K562 (cell line): ENCODE measurements at regions of chr3 and their contacts with region 1.

Region 1: DNA sequence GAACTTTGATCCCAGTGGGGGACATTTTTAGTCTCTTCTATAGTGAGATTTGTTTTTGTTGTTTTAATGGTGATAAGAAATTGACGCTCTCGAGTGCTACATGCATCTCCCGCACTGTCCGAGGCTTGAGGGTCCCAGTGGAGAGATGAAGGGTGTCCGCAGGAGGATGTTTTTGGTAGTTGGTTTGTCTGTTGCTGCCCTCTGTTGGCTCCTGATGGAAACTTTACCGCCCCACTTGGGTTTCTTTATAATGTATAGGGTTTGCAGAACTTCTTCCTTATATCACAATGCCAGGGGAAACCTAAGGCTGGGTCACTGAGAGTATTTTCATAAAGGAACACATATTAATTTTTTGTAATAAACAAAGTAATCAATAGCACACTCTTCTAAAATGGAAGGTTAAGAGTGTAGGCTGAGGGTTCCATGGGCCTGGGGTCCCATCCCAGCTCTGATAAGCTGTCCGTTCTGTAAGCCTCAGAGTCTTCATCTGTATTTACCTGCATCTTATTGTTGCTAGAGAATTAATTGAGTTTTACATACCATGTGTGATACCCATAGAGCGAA is 185.3 kb upstream of the FEZF2 start:
- DNase-seq: peak; percentile 12 to 17 (median 14)
- ATAC-seq: peak; percentile 59
- H3K4me3 ChIP-seq: no peak overlapping the region
- H3K27ac ChIP-seq: no peak overlapping the region
- H3K4me1 ChIP-seq: no peaks in the 10 kb centered on the region
- H3K27me3 ChIP-seq: no peaks in the 10 kb centered on the region
- CTCF ChIP-seq: peak; percentile 32 to 44 (median 38); a peak in 4 of 6 replicates
- EP300 ChIP-seq: no peak
- POLR2A ChIP-seq: no peak
- RAD21 ChIP-seq: peak; percentile 10 to 35; a peak in 2 of 4 replicates

Region 2: DNA sequence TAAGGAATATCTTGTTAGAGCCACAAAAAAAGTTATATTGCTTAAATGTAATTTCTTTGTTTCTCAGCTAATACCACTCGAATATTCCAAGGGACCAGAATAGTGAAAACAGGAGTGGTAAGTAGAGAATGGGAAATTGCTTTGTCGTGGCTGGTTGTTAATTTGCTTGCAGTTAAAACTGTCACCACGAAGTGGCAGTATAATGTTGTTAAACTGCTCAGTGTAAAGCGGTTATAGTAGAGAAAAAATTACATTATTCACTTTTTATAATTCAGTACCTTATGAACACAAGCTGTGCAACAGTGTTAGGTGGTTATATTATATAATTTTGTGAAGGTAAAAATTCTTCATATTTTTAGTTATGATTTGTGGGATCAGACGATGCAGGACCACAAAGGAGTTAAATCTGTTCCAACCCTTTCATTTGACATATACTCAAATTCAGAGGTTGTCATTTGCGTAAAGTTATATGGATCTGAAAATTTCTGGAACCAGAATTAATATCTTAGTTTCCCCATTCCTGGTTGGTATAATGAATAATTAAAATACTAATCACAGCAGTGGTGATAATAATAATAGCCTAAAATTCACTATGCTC is 357.1 kb before region 1 on chr3:
- CTCF ChIA-PET with region 1: interaction called, 3 read pairs
- POLR2A ChIA-PET with region 1: no interaction called
- in situ Hi-C with region 1: loop called (anchors 10 kb)
- intact Hi-C with region 1: loop called (anchors 2 kb)
- DNase-seq: peak; percentile 13 to 36 (median 28)
- ATAC-seq: peak; percentile 64; the same call in 2 of the 3 replicates
- H3K4me3 ChIP-seq: no peak overlapping the region
- H3K27ac ChIP-seq: no peak overlapping the region
- H3K4me1 ChIP-seq: no peaks in the 10 kb centered on the region; a peak in 1 of 5 replicates
- H3K27me3 ChIP-seq: peaks cover 0 to 8% of the 10 kb centered on the region in 2 experiments; a peak in 1 of 5 replicates
- CTCF ChIP-seq: peak; percentile 23 to 57 (median 39); a peak in 4 of 6 replicates
- EP300 ChIP-seq: no peak
- POLR2A ChIP-seq: no peak
- RAD21 ChIP-seq: peak in 1 of 2 experiments; percentile 58; a peak in 2 of 4 replicates

Region 3: GRCh38 chr3:62332835-62333244 is 225.8 kb before region 1 on chr3:
- CTCF ChIA-PET with region 1: interaction called, 3 read pairs
- POLR2A ChIA-PET with region 1: no interaction called
- in situ Hi-C with region 1: loop called (anchors 10 kb)
- intact Hi-C with region 1: loop called (anchors 2 kb)
- DNase-seq: peak in 1 of 4 experiments; percentile 6
- ATAC-seq: no peak
- H3K4me3 ChIP-seq: no peak overlapping the region
- H3K27ac ChIP-seq: no peak overlapping the region
- H3K4me1 ChIP-seq: no peaks in the 10 kb centered on the region
- H3K27me3 ChIP-seq: no peaks in the 10 kb centered on the region
- CTCF ChIP-seq: peak in 1 of 3 experiments; percentile 38; a peak in 4 of 6 replicates
- EP300 ChIP-seq: no peak
- POLR2A ChIP-seq: no peak
- RAD21 ChIP-seq: peak in 1 of 2 experiments; percentile 17; a peak in 1 of 4 replicates